ENCODE measurements at regions of chr9 and their contacts with region 1.

Region 1: GRCh38 chr9:5886114-5886939 is 4.4 kb upstream of the MLANA start:
- DNase-seq: peak; percentile 67
- H3K4me3 Mint-ChIP-seq: no peak overlapping the region
- H3K27ac Mint-ChIP-seq: no peak overlapping the region
- H3K4me1 Mint-ChIP-seq: peaks cover 7% of the 10 kb centered on the region
- H3K27me3 Mint-ChIP-seq: peaks cover 5% of the 10 kb centered on the region

Region 2: GRCh38 chr9:5851445-5851844 is 34.9 kb before region 1 on chr9:
- intact Hi-C with region 1: loop called (anchors 2 kb)
- DNase-seq: peak; percentile 48
- H3K4me3 Mint-ChIP-seq: peak overlapping the region; percentile 15
- H3K27ac Mint-ChIP-seq: peak overlapping the region; percentile 75
- H3K4me1 Mint-ChIP-seq: peaks cover 67% of the 10 kb centered on the region
- H3K27me3 Mint-ChIP-seq: no peaks in the 10 kb centered on the region

Region 3: DNA sequence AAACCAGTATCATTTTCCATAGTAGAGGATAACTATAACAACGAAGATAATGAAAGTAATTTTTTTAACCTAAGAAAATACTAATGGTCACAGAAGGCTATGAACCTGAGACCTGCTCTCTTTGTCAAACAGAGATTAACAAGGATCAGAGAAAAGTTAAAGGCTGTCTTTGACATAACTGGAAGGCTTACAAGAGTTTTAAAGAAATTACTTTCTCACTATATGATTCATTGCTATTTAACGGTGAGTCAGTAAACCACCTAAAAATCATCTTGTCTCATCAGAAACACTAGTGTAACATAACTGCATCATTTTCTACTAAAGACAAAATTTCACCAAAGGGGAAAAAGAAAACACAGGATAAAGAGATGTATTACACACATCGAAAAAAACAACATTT is 23.6 kb after region 1 on chr9:
- intact Hi-C with region 1: loop called (anchors 2 kb)
- DNase-seq: no peak
- H3K4me3 Mint-ChIP-seq: no peak overlapping the region
- H3K27ac Mint-ChIP-seq: peak overlapping the region; percentile 59
- H3K4me1 Mint-ChIP-seq: peaks cover 18% of the 10 kb centered on the region
- H3K27me3 Mint-ChIP-seq: no peaks in the 10 kb centered on the region

Region 4: DNA sequence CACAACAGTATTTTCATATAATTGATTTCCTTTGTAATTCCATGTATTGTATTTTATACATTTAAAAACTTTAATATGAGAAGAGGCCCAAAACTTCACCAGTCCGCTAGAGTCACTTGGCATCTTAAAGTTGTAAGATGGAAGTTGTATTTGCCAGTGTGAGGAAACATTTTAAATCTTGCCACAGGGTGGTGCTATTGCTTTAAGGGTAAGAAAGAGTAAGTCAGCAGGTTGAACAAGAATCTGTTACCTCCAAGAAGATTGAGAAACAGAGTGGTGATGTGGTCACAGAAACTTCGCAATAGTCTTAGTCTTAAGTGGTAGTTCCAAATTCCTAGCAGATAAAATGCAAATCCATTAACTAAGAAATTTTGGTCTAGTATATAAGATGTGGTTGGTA is 168.9 kb after region 1 on chr9:
- intact Hi-C with region 1: loop called (anchors 1 kb)
- DNase-seq: peak; percentile 22
- H3K4me3 Mint-ChIP-seq: no peak overlapping the region
- H3K27ac Mint-ChIP-seq: no peak overlapping the region
- H3K4me1 Mint-ChIP-seq: peaks cover 2% of the 10 kb centered on the region
- H3K27me3 Mint-ChIP-seq: peaks cover 13% of the 10 kb centered on the region